Activated CD4-positive, alpha-beta T cell treated with anti-CD3 and anti-CD28 coated beads for 36 hours (primary cell): ENCODE measurements at regions of chr3 and their contacts with region 1.

Region 1: DNA sequence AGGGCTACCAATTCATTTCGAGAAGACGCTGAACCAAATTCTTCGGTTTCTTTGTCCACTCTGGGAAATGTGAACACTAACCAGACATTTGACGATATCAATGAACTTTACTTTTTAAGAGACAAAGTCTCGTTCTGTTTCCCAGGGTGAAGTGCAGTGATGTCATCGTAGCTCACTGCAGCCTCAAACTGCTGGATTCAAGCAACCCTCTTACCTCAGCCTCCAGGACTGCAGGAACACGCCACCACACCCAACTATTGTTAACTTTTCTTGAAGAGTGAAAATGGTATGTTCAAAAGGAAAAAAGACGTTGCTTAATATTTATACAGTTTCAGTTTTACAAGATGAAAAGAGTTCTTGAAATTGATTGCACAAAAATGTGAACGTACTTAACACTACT is 30.6 kb downstream of the MB21D2 start:
- DNase-seq: peak; percentile 20
- ATAC-seq: peak; percentile 52
- H3K4me3 Mint-ChIP-seq: no peak overlapping the region
- H3K27ac Mint-ChIP-seq: peak overlapping the region; percentile 62
- H3K4me1 Mint-ChIP-seq: peaks cover 18% of the 10 kb centered on the region
- H3K27me3 Mint-ChIP-seq: peaks cover 15% of the 10 kb centered on the region

Region 2: DNA sequence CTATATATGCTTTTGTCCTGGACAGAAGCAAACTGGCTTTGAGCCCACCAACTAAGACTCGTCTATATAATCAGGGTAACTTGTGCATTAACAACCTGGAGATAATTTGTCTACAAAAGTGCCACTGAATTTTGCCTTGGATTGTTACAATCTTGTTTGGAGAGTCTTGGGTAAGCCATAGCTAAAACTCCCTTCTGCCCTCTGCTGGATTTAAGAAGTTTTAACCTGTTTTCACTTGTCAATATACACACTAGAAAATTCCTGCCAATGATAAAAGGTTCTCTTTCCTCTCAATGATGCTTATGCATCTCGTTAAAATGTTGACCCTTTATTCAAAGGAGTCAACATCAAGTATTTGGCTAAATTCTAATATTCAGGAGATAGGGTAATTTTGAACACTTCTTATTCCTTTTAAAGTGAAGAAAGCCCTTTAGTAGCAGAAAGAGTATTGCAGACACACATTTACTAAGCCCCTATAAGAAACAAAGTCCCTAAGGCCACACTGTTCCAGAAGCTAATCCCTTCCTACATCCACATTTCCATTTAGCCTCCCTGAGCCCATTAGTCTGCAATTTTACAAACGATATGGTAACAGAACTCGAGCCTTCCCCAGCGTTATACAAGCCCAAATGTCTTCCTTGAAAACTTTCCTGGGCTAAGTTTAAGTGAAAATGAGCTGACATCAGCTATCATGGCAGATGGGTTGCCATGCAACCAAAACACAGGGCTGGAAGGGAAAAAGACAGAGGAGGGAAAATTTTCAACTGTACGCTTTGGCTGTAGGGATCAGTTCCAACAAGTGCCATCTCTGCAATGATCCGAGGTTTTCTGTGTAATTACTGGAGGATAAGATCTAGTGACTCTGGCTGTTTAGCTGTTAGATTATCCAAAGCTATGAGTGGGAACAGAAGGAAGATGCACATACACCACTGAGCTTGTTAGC is 83.8 kb before region 1 on chr3:
- CTCF ChIA-PET with region 1: no interaction called
- POLR2A ChIA-PET with region 1: no interaction called
- intact Hi-C with region 1: no loop called
- DNase-seq: no peak
- ATAC-seq: peak; percentile 36
- H3K4me3 Mint-ChIP-seq: no peak overlapping the region
- H3K27ac Mint-ChIP-seq: no peak overlapping the region
- H3K4me1 Mint-ChIP-seq: no peaks in the 10 kb centered on the region
- H3K27me3 Mint-ChIP-seq: peaks cover 2% of the 10 kb centered on the region

Region 3: GRCh38 chr3:192843723-192844485 is 43.1 kb before region 1 on chr3:
- CTCF ChIA-PET with region 1: interaction called, 3 read pairs
- POLR2A ChIA-PET with region 1: no interaction called
- intact Hi-C with region 1: loop called in 1 of 2 experiments (anchors 1 kb)
- DNase-seq: no peak
- ATAC-seq: no peak
- H3K4me3 Mint-ChIP-seq: no peak overlapping the region
- H3K27ac Mint-ChIP-seq: no peak overlapping the region
- H3K4me1 Mint-ChIP-seq: peaks cover 4% of the 10 kb centered on the region
- H3K27me3 Mint-ChIP-seq: peaks cover 2% of the 10 kb centered on the region

Region 4: GRCh38 chr3:192851821-192852424 is 35.1 kb before region 1 on chr3:
- CTCF ChIA-PET with region 1: interaction called, 3 read pairs
- POLR2A ChIA-PET with region 1: interaction called, 3 read pairs
- intact Hi-C with region 1: loop called (anchors 1 kb)
- DNase-seq: no peak
- ATAC-seq: no peak
- H3K4me3 Mint-ChIP-seq: no peak overlapping the region
- H3K27ac Mint-ChIP-seq: no peak overlapping the region
- H3K4me1 Mint-ChIP-seq: peaks cover 18% of the 10 kb centered on the region
- H3K27me3 Mint-ChIP-seq: peaks cover 11% of the 10 kb centered on the region

Region 5: GRCh38 chr3:193016437-193016901 is 129.4 kb after region 1 on chr3:
- CTCF ChIA-PET with region 1: no interaction called
- POLR2A ChIA-PET with region 1: no interaction called
- intact Hi-C with region 1: no loop called
- DNase-seq: no peak
- ATAC-seq: no peak
- H3K4me3 Mint-ChIP-seq: no peak overlapping the region
- H3K27ac Mint-ChIP-seq: no peak overlapping the region
- H3K4me1 Mint-ChIP-seq: no peaks in the 10 kb centered on the region
- H3K27me3 Mint-ChIP-seq: peaks cover 7% of the 10 kb centered on the region